ENCODE measurements at regions of chr10 and their contacts with region 1.

Region 1: DNA sequence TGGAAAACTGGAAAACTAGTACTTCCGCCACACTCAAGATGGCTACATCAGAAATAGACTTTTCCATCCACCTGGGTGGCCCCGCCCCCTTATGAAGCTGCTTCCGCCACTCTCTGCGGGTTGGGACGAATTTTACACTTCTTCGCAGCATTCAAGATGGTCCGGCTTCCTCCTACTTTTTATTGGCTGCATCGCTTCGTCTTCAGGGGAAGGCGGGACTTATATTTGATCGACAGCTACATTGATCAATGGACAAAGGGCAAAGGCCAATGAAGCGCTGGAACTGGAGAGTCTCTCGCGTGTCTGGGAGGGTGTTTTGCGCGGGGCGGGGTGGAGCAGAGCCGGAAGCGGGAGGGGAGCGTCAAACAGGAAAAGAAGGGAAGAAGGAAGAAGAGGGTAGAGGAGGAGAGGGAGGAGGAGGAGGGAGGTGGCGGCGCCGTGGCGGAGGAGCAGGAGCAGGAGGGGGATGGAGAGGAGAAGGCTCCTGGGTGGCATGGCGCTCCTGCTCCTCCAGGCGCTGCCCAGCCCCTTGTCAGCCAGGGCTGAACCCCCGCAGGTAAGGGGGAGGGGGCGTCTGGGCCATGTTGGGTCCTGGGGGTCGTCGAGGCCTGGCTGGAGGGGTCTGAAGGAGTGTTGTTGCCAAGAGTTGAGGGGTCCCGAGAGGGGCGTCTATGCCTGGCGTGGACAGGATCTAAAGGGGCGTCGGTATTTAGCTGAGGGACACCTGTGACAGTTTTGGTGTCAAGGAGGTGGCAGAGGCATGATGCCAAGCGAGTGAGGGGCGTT is at the start of gene WBP1L:
- DNase-seq: peak; percentile 100
- H3K4me3 ChIP-seq: peak within 1 kb of the TSS; percentile 75 to 98 (median 88)
- H3K27ac ChIP-seq: peak within 1 kb of the TSS; percentile 45
- H3K4me1 ChIP-seq: peaks cover 6% of the 10 kb centered on the region
- H3K27me3 ChIP-seq: no peaks in the 10 kb centered on the region
- CTCF ChIP-seq: no peak
- total RNA-seq, gene WBP1L: 18.4 to 48.2 TPM

Region 2: DNA sequence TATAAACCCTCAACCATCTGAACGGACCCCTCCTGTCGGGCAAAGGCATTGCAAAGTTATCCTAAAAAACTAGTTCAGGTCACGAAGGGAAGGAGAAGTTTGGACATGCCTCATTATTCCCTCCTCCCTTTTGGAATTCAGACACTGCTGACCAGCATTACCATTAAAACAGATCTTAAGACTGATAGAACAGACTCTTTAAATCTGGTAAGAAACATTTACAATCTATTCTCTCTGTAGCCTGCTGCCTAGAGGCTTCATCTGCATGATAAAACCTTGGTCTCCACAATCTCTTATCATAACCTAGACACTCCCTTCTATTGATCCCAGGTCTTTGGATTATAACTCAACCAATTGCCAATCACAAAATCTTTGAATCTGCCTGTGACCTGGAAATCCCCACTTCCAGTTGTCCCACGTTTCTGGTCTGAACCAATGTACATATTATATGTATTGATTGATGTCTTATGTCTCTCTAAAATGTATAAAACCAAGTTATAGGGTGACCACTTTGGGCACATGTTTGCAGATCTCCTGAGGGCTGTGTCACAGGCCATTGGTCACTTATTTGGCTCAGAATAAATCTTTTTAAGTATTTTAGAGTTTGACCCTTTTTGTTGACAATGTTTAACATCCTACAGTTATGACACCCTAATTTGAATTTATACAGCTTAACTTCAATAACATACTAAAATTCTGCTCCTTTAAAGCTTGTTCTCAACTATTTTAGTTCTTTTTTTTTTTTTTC is 150.9 kb after region 1 on chr10:
- CTCF ChIA-PET with region 1: no interaction called
- dilution Hi-C with region 1: no loop called
- in situ Hi-C with region 1: loop called in 1 of 2 experiments (anchors 10 kb)
- intact Hi-C with region 1: no loop called
- DNase-seq: no peak
- H3K4me3 ChIP-seq: no peak overlapping the region
- H3K27ac ChIP-seq: no peak overlapping the region
- H3K4me1 ChIP-seq: no peaks in the 10 kb centered on the region
- H3K27me3 ChIP-seq: no peaks in the 10 kb centered on the region
- CTCF ChIP-seq: no peak

Region 3: DNA sequence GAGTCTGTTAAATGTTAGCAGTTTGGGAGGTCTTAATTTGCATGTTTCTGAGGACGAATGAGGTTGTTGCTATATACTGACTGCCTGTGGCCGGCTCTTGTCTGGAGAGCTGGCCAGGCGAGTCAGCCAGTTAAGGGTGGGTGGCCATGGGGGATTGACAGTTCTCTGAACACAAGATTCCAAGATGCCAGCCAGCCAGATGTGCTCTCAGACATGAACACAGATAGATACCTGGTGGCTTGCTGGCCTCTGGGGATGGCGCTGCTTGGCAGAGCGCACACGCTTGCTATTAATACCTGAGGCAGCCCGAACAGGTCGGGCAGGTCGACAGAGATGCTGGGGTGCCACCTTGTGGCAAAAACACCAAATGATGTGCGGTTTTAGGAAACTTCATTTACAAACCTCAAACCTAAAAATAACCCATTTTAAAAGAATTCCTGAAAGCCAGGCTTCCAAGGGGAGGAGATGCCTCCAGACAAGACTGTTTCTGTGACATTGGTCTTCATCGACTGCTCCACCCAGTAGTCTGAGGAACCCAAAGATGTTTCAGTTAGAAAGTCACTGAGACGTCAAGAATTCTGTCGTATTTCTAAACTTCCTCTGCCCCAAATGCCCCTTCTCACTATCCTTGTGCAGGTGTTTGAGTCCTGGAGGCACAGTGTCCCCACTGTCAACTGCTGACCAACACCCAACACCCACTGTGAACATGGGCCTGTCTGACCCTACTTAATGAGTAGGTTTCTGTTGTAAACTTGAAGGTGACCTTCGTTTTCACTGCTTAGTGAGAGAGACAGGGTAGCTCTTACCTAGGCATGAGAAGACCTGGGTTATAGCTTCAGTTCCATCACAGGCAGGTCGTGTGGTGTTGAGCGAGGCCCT is 325.9 kb after region 1 on chr10:
- CTCF ChIA-PET with region 1: no interaction called
- dilution Hi-C with region 1: no loop called
- in situ Hi-C with region 1: loop called in 1 of 2 experiments (anchors 25 kb)
- intact Hi-C with region 1: no loop called
- DNase-seq: peak; percentile 48
- H3K4me3 ChIP-seq: no peak overlapping the region
- H3K27ac ChIP-seq: no peak overlapping the region
- H3K4me1 ChIP-seq: no peaks in the 10 kb centered on the region
- H3K27me3 ChIP-seq: no peaks in the 10 kb centered on the region
- CTCF ChIP-seq: peak; percentile 68 to 73